Heart left ventricle (tissue), 16 donors: ENCODE measurements at regions of chr6 and their contacts with region 1.

Region 1: GRCh38 chr6:13044373-13045239 is 283.7 kb downstream of the TBC1D7 start:
- DNase-seq: peak in 1 of 5 donors; percentile 31
- ATAC-seq: peak in 2 of 4 donors; percentile 41 to 56
- H3K4me3 ChIP-seq: no peak overlapping the region
- H3K27ac ChIP-seq: no peak overlapping the region
- H3K4me1 ChIP-seq: peaks cover 0 to 9% (median 0%) of the 10 kb centered on the region in 12 donors
- H3K27me3 ChIP-seq: no peaks in the 10 kb centered on the region
- CTCF ChIP-seq: no peak
- POLR2A ChIP-seq: no peak

Region 2: DNA sequence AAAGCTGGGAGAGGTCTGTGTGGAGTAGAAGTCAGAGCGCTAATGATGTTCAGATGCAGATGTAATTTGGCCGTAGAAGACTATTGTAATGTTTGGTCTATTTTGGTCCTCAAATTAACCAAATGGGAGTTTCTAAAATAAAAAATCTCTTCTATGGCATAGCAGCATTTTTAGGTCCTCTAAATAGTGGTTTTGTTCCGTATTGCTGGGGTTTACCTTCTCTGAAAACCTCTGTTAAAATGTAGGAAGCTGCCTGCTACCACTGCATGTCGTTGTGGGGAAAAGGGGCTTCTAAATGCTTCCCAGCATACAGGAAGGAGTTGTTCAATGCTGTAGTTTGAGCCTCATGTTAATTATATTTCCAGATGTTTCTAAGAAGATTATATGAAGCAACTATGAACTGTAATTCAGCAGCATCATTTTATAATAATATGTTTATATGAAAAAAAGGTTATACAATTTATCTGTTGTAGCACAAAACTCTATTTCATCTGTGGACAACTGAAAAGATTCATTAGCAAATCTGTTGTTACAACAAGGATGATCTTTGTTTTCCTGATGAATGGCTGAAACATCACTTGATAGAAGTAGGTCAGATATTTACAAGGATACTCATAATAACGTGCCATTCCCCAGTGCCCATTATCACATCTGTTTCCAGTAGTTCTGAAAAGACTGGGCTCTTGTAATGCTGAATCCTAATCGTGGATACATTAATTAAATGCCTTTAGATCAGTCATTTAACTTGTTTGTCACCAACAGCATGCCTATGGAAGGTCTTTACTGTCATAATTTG is 27.1 kb after region 1 on chr6:
- intact Hi-C with region 1: no loop called
- DNase-seq: no peak
- ATAC-seq: no peak
- H3K4me3 ChIP-seq: no peak overlapping the region
- H3K27ac ChIP-seq: peak overlapping the region in 10 of 12 donors; percentile 7 to 63 (median 48)
- H3K4me1 ChIP-seq: peaks cover 4 to 85% (median 41%) of the 10 kb centered on the region in 12 donors
- H3K27me3 ChIP-seq: no peaks in the 10 kb centered on the region
- CTCF ChIP-seq: no peak
- POLR2A ChIP-seq: no peak

Region 3: GRCh38 chr6:13105139-13105538 is 60.5 kb after region 1 on chr6:
- intact Hi-C with region 1: loop called in 1 of 10 experiments (anchors 5 kb)
- DNase-seq: no peak
- ATAC-seq: peak in 1 of 4 donors; percentile 55
- H3K4me3 ChIP-seq: no peak overlapping the region
- H3K27ac ChIP-seq: no peak overlapping the region
- H3K4me1 ChIP-seq: peaks cover 0 to 29% (median 0%) of the 10 kb centered on the region in 12 donors
- H3K27me3 ChIP-seq: no peaks in the 10 kb centered on the region
- CTCF ChIP-seq: no peak
- POLR2A ChIP-seq: no peak